ENCODE measurements at regions of chr14 and their contacts with region 1.

Region 1: DNA sequence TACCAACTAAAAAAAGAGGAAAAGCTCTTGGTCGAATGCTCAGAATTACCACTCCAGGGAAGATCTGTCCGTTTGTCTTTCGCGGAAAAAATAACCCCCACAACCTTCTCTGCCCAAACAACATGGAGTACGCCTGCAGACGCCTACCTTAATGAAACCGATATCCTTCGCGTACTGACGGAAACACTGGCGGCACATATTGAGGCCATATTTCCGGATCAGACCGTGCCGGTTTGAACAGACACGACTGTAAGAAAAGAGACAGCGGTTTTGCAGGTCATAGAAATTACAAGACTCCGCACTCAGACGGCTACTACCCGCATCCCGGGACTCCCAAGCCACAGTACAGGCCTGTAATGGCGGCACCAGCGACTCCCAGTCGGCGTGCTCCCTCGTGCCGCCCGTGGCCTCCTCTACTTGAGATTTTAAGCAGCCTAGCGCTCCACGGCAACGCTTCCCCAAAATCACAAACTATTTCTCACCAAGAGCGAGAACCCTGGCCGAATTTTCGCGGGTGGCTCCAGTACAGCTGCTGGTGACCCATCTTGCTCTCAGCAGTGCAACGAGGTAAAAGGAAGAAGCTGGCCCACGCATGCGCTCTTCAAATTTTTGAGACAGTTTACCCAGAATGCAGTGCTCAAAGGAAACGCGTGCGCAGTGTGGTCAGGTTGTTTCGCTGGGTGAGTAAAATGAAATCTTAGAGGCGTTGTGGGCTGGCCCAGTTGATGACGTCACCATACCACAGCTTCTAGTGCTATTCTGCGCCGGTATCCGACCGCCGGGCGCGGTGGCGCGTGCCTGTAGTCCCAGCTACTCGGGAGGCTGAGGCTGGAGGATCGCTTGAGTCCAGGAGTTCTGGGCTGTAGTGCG is at the start of gene RPS29:
- DNase-seq: peak; percentile 98
- ATAC-seq: peak; percentile 81
- H3K4me3 Mint-ChIP-seq: peak within 1 kb of the TSS; percentile 95
- H3K27ac Mint-ChIP-seq: peak within 1 kb of the TSS; percentile 97
- H3K4me1 Mint-ChIP-seq: peaks cover 34% of the 10 kb centered on the region
- H3K27me3 Mint-ChIP-seq: peaks cover 4% of the 10 kb centered on the region; the same call in 1 of the 2 replicates
- CTCF ChIP-seq: no peak
- total RNA-seq, gene RPS29: 2,168 to 2,393 TPM (median 2,330 TPM) in 3 replicates

Region 2: GRCh38 chr14:49550286-49551184 is 35.5 kb before region 1 on chr14:
- CTCF ChIA-PET with region 1: interaction called, 10 read pairs
- POLR2A ChIA-PET with region 1: no interaction called
- DNase-seq: no peak
- ATAC-seq: peak; percentile 24; the same call in 1 of the 2 replicates
- H3K4me3 Mint-ChIP-seq: peak overlapping the region; percentile 33; the same call in 1 of the 2 replicates
- H3K27ac Mint-ChIP-seq: no peak overlapping the region
- H3K4me1 Mint-ChIP-seq: peaks cover 41% of the 10 kb centered on the region
- H3K27me3 Mint-ChIP-seq: no peaks in the 10 kb centered on the region; the same call in 1 of the 2 replicates
- CTCF ChIP-seq: no peak

Region 3: GRCh38 chr14:49598485-49599300 is 12.7 kb after region 1 on chr14 and contains the start of gene LRR1:
- CTCF ChIA-PET with region 1: interaction called, 43 read pairs
- POLR2A ChIA-PET with region 1: interaction called, 26 read pairs
- DNase-seq: peak; percentile 83
- ATAC-seq: peak; percentile 74
- H3K4me3 Mint-ChIP-seq: peak within 1 kb of the TSS; percentile 84
- H3K27ac Mint-ChIP-seq: peak within 1 kb of the TSS; percentile 94
- H3K4me1 Mint-ChIP-seq: peaks cover 10% of the 10 kb centered on the region
- H3K27me3 Mint-ChIP-seq: peaks cover 5% of the 10 kb centered on the region
- CTCF ChIP-seq: no peak
- total RNA-seq, gene LRR1: 32.5 to 42.6 TPM (median 32.8 TPM) in 3 replicates